Activated CD4-positive, alpha-beta T cell treated with anti-CD3 and anti-CD28 coated beads, Interleukin-2, amount 10 ng/mL, durations not matched to agents 24 days and 14 days (primary cell): ENCODE measurements at regions of chr19 and their contacts with region 1.

Region 1: GRCh38 chr19:19033426-19034203 is at the starts of genes ARMC6 and SUGP2:
- DNase-seq: peak; percentile 97
- H3K4me3 Mint-ChIP-seq: peak within 1 kb of the TSS; percentile 95
- H3K27ac Mint-ChIP-seq: peak within 1 kb of the TSS; percentile 96
- H3K4me1 Mint-ChIP-seq: peaks cover 32% of the 10 kb centered on the region
- H3K27me3 Mint-ChIP-seq: peaks cover 1% of the 10 kb centered on the region
- total RNA-seq, gene ARMC6: 57.7 and 61.9 TPM in 2 replicates
- total RNA-seq, gene SUGP2: 114 and 128 TPM in 2 replicates

Region 2: DNA sequence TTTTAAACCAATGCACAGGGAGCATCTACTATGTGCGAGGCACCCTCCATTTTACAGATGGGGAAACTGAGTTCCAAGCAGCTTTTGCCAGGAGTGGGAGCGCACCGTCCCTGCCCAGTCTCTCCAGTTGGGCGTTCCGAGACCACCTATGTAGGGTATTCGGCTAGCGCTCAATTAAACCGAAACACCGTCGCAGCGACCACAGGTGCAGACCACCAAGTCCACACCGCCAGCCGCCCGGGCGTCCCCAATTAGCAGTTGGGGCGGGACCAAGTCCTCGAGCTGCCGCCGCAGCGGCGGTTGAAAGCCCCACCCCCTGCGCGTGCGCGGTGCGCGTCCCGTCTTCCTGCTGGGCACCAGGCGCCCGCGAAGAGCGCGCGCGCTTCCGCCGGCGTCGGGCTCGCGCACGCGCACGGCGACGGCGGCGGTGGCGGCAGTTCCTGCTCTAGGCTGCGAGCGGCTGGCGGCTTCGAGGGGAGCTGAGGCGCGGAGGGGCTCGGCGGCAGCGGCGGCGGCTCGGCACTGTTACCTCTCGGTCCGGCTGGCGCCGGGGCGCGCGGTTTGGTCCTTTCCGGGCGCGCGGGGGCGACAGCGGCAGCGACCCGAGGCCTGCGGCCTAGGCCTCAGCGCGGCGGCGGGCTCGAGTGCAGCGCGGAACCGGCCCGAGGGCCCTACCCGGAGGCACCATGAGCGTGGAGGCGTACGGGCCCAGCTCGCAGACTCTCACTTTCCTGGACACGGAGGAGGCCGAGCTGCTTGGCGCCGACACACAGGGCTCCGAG is 201.9 kb before region 1 on chr19 and contains the start of gene UPF1:
- intact Hi-C with region 1: loop called (anchors 5 kb)
- DNase-seq: peak; percentile 99
- H3K4me3 Mint-ChIP-seq: peak within 1 kb of the TSS; percentile 98
- H3K27ac Mint-ChIP-seq: peak within 1 kb of the TSS; percentile 95
- H3K4me1 Mint-ChIP-seq: peaks cover 34% of the 10 kb centered on the region
- H3K27me3 Mint-ChIP-seq: peaks cover 9% of the 10 kb centered on the region
- total RNA-seq, gene UPF1: 97.6 and 110 TPM in 2 replicates

Region 3: GRCh38 chr19:18975011-18975410 is 58.6 kb before region 1 on chr19:
- intact Hi-C with region 1: no loop called
- DNase-seq: no peak
- H3K4me3 Mint-ChIP-seq: no peak overlapping the region
- H3K27ac Mint-ChIP-seq: no peak overlapping the region
- H3K4me1 Mint-ChIP-seq: peaks cover 2% of the 10 kb centered on the region
- H3K27me3 Mint-ChIP-seq: peaks cover 3% of the 10 kb centered on the region

Region 4: GRCh38 chr19:19063183-19064097 is 29.8 kb after region 1 on chr19 and contains the start of gene SLC25A42:
- intact Hi-C with region 1: loop called (anchors 1 kb)
- DNase-seq: peak; percentile 100
- H3K4me3 Mint-ChIP-seq: peak within 1 kb of the TSS; percentile 88
- H3K27ac Mint-ChIP-seq: peak within 1 kb of the TSS; percentile 83
- H3K4me1 Mint-ChIP-seq: peaks cover 27% of the 10 kb centered on the region
- H3K27me3 Mint-ChIP-seq: no peaks in the 10 kb centered on the region
- total RNA-seq, gene SLC25A42: 8.0 and 8.1 TPM in 2 replicates